Adrenal gland (tissue), 19 donors: ENCODE measurements at regions of chr16 and their contacts with region 1.

Region 1: GRCh38 chr16:22001591-22001990 is 675 bp upstream of the PDZD9 start:
- DNase-seq: no peak
- H3K4me3 ChIP-seq: no peak overlapping the region
- H3K27ac ChIP-seq: no peak overlapping the region
- H3K4me1 ChIP-seq: peaks cover 5 to 15% of the 10 kb centered on the region in 2 donors
- H3K27me3 ChIP-seq: no peaks in the 10 kb centered on the region
- CTCF ChIP-seq: no peak
- POLR2A ChIP-seq: no peak

Region 2: GRCh38 chr16:22070361-22071330 is 69.1 kb after region 1 on chr16:
- intact Hi-C with region 1: loop called in 1 of 2 experiments (anchors 5 kb)
- DNase-seq: peak in 4 of 7 donors; percentile 15 to 29 (median 29)
- H3K4me3 ChIP-seq: no peak overlapping the region
- H3K27ac ChIP-seq: peak overlapping the region in 2 of 5 donors; percentile 16 to 50
- H3K4me1 ChIP-seq: peaks cover 6 to 30% of the 10 kb centered on the region in 2 donors
- H3K27me3 ChIP-seq: no peaks in the 10 kb centered on the region
- CTCF ChIP-seq: no peak
- POLR2A ChIP-seq: no peak

Region 3: DNA sequence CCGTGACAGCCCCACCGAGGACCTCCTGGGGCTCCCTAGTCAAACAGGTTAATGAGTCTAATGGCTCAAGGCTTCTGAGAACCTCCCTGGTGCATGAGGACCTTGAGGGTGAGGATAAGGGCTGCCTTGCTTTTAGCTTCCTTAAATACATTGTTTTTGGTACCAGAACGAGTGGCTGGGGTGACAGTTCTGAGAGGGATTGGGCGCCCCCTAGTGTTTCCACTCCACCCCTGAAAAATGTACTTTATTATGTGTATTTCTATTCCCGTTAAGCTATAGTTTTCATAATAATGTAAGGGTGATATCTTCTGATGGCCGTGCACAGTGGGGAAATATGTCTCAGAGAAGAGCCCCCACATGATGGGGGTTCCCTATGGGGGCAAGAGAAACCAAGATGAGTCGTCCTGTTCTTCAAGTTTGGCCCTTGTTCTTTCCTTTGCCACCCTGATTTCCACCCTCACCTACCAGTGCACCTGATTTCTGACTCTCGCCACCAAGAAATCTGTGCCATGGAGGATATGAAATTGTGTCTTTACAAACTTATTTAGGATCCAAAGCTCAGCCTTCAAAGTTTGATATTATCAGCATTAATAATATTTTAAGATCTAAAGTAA is 76.2 kb after region 1 on chr16:
- intact Hi-C with region 1: loop called (anchors 2 to 5 kb)
- DNase-seq: peak; percentile 50 to 89 (median 72)
- H3K4me3 ChIP-seq: no peak overlapping the region
- H3K27ac ChIP-seq: no peak overlapping the region
- H3K4me1 ChIP-seq: peaks cover 3 to 15% of the 10 kb centered on the region in 2 donors
- H3K27me3 ChIP-seq: no peaks in the 10 kb centered on the region
- CTCF ChIP-seq: peak; percentile 71 to 88 (median 80)
- POLR2A ChIP-seq: no peak

Region 4: DNA sequence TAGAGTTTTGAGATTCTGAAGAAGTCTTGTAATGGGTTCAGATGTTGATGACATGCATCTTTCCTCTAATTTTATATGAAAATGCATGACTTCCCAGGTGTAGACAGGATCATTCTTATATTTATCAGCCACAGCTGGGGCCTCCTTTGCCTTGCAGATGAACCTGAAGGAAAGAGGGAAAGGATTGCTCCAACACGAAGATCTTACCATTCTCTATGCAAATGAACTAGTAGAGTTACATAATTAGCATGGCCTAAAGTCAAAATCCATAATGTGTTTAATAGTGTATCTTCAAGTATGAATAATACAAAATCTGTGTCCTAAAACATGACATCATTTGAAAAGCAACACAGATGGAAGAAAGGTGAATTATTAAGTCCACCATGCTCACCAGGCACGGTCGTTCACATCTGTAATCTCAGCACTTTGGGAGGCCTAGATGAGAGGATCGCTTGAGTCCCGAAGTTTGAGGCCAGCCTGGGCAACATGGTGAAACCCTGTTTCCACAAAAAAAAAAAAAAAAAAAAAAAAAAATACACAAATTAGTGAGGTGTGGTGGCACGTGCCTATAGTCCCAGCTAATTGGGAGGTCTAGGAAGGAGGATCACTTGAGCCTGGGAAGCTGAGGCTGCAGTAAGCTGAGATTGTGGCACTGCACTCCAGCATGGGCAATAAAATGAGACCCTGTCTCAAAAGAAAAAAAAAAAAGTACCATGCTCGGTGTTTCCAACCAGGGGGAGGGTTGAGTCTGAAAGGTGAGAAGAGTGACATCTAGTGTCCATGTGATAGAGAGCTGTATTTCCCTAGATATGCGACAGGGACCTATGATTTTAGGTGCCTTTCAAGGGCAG is 97.0 kb after region 1 on chr16:
- intact Hi-C with region 1: loop called (anchors 5 to 10 kb)
- DNase-seq: peak in 3 of 7 donors; percentile 11 to 20 (median 20)
- H3K4me3 ChIP-seq: no peak overlapping the region
- H3K27ac ChIP-seq: no peak overlapping the region
- H3K4me1 ChIP-seq: no peaks in the 10 kb centered on the region
- H3K27me3 ChIP-seq: no peaks in the 10 kb centered on the region
- CTCF ChIP-seq: peak in 5 of 6 experiments; percentile 52 to 80 (median 66)
- POLR2A ChIP-seq: no peak

Region 5: GRCh38 chr16:22188595-22189442 is 187.2 kb after region 1 on chr16:
- intact Hi-C with region 1: loop called (anchors 2 to 5 kb)
- DNase-seq: peak; percentile 58 to 89 (median 80)
- H3K4me3 ChIP-seq: no peak overlapping the region
- H3K27ac ChIP-seq: peak overlapping the region in 3 of 5 donors; percentile 90 to 96 (median 95)
- H3K4me1 ChIP-seq: peaks cover 28 to 35% of the 10 kb centered on the region in 2 donors
- H3K27me3 ChIP-seq: no peaks in the 10 kb centered on the region
- CTCF ChIP-seq: peak; percentile 60 to 88 (median 84)
- POLR2A ChIP-seq: no peak